PC-9 (cell line): ENCODE measurements at regions of chr6 and their contacts with region 1.

Region 1: DNA sequence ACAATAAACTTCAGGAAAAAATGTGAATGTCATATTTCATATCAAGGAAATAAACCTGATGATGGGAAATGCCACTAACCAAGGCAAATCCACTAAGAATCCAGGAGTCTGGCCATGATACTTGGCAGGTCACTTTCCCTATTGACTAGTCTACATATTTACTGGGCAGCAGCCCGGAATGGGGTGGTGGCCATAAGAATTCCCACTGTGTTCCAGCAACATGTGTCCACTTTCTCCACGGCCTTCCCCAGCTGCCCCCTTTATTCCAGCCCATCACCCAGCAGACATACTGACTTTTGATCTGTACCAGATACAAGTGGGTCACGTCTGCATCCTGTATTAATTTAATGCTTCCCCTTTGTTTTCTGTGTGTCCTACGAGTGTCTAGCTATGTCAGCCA is 234.5 kb upstream of the PRDM1 start:
- DNase-seq: no peak
- H3K4me3 ChIP-seq: no peak overlapping the region
- H3K27ac ChIP-seq: no peak overlapping the region
- H3K4me1 ChIP-seq: no peaks in the 10 kb centered on the region
- H3K27me3 ChIP-seq: no peaks in the 10 kb centered on the region
- CTCF ChIP-seq: no peak

Region 2: GRCh38 chr6:106017454-106017853 is 165.8 kb after region 1 on chr6:
- CTCF ChIA-PET with region 1: interaction called, 10 read pairs
- POLR2A ChIA-PET with region 1: no interaction called
- intact Hi-C with region 1: no loop called
- DNase-seq: no peak
- H3K4me3 ChIP-seq: no peak overlapping the region
- H3K27ac ChIP-seq: no peak overlapping the region
- H3K4me1 ChIP-seq: no peaks in the 10 kb centered on the region
- H3K27me3 ChIP-seq: no peaks in the 10 kb centered on the region
- CTCF ChIP-seq: no peak